Cardiac septum (tissue), 1 donor: ENCODE measurements at regions of chr2 and their contacts with region 1.

Region 1: DNA sequence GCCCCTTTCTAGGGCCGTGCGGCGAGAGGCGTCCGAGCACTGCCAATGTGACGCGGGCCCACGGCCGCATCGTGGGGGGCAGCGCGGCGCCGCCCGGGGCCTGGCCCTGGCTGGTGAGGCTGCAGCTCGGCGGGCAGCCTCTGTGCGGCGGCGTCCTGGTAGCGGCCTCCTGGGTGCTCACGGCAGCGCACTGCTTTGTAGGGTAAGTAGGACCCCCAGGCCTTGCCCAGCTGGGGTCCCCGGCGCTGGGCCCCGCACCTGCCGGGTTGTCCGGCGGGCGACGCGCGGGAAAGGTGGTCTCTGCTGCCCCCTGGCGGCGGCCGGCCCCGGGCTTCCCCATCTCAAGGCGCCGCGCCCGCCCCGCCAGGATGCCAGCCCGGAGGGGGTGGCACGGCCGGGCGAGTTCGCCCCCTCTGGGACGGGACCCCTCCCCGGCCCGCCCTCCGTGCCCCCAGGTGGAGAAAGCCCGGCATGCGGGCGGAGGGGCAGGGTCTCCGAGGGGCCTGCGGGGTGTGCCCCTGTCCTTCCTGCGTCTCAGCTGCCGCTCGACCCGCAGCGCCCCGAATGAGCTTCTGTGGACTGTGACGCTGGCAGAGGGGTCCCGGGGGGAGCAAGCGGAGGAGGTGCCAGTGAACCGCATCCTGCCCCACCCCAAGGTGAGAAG is 1.9 kb downstream of the PRSS56 start:
- DNase-seq: no peak

Region 2: DNA sequence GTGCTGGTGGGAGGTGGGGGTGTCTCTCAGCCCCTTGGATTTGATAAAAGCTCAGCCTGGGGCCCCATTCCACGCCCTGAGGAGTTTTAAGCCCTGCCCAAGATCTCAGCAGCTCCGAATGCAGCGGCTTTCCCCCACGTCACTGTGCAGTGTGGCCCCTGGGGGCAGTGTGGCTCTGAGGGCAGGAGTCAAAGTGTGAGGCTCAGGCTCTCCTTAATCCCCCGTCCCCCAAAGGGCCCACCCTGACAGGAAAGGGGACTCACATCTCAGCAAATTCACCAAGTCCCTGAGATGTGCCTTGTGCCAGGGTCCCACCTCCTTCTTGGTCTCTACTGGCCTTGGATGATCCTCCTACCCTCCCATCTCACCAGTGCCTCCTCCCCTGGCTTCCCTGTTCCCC is 621.1 kb before region 1 on chr2:
- intact Hi-C with region 1: loop called (anchors 5 kb)
- DNase-seq: no peak

Region 3: GRCh38 chr2:232447638-232448303 is 74.3 kb before region 1 on chr2:
- intact Hi-C with region 1: loop called (anchors 2 kb)
- DNase-seq: no peak